ENCODE measurements at regions of chr3 and their contacts with region 1.

Region 1: DNA sequence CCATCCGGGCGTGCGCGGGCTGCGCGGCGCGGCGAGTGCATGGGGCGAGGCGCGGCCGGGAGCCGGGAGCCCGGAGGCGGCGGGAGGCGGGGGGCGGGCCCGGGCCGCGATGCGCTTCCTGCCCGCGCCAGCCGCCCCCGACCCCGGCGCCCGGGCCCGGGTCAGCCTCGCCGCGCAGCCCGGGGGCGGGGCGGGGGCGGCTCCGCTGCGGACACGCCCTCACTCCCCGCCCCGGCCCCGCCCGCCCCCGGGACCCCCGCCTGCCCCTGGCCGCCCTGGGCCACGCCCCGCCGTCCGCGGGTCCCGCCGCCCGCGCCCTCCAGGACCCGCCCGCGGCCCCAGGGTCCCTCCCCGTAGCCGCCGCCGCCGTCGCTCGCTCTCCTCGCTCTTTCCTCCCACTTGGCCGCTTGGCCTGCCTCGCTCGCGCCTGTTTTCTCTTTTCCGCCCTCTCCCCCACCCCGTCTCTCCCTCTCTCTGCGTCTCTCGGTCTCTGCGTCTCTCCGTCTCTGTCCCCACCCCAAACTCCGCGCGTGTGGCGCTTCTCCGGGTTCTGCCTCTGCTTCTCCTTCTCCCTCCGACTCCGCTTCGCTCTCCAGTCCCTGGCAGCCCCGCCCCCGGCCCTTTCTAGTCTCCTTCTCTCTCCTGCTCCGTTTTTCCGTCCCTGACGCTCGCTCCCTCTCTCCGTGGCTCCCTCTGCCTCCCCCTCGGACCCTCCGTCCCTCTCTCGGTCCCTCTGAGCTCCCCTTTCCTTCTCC is at the start of gene PLXND1:
- DNase-seq: peak; percentile 30 to 71 (median 53)
- H3K4me3 ChIP-seq: peak within 1 kb of the TSS; percentile 47
- H3K4me3 Mint-ChIP-seq: peak within 1 kb of the TSS; percentile 91 to 98 (median 94)
- H3K27ac ChIP-seq: peak within 1 kb of the TSS; percentile 24
- H3K27ac Mint-ChIP-seq: peak within 1 kb of the TSS; percentile 77 to 96 (median 92)
- H3K4me1 ChIP-seq: peaks cover 4% of the 10 kb centered on the region
- H3K4me1 Mint-ChIP-seq: peaks cover 34 to 54% (median 35%) of the 10 kb centered on the region in 3 donors
- H3K27me3 ChIP-seq: no peaks in the 10 kb centered on the region
- H3K27me3 Mint-ChIP-seq: peaks cover 3 to 4% of the 10 kb centered on the region in 2 donors
- total RNA-seq, gene PLXND1: 12.1 to 15.2 TPM

Region 2: DNA sequence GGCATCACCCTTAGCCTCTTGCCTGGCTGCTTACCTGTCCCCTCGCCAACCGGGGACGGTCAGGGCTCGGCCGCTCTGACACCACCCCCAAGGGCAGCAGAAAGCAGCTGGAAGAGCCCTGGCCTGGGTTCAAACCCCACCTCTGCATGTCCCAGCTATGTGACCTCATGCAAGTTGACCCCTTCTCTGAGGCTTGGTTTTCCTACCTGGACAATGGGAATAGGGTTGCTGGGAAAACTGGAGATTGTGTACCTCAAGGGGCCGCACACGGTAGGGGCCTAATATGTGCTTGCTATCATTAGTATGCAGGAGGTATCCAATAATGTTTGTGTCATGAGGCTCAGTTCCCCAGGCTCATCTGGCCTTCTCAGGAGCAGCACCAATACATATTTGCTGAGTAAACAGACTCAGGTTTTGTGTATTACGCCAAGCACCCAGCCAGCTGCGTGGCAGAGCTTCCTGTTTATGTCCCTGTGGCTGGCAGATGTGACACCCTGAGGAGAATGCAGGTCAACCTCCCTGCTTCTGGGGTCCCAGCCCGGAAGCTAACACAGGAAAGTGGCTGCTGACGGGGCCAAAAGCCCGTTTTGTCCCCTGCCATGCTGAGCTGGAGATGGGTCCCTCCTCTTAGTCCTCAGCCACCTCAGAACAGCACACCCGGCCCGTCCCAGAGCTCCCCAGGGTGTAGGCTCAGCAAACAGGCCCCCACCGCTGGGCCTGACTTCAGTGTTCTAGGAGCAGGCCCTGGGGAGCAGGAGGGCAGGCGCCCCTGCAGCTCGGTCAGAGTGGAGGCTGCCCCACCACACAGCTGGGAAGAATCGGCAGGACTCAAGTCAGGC is 30.1 kb before region 1 on chr3:
- CTCF ChIA-PET with region 1: interaction called, 21 read pairs
- POLR2A ChIA-PET with region 1: interaction called, 54 read pairs
- DNase-seq: peak; percentile 69 to 92 (median 83)
- H3K4me3 ChIP-seq: no peak overlapping the region
- H3K4me3 Mint-ChIP-seq: peak overlapping the region; percentile 50 to 86 (median 68)
- H3K27ac ChIP-seq: peak overlapping the region; percentile 16
- H3K27ac Mint-ChIP-seq: peak overlapping the region; percentile 87 to 100 (median 98)
- H3K4me1 ChIP-seq: peaks cover 47% of the 10 kb centered on the region
- H3K4me1 Mint-ChIP-seq: peaks cover 57 to 77% (median 61%) of the 10 kb centered on the region in 3 donors
- H3K27me3 ChIP-seq: no peaks in the 10 kb centered on the region
- H3K27me3 Mint-ChIP-seq: no peaks in the 10 kb centered on the region

Region 3: DNA sequence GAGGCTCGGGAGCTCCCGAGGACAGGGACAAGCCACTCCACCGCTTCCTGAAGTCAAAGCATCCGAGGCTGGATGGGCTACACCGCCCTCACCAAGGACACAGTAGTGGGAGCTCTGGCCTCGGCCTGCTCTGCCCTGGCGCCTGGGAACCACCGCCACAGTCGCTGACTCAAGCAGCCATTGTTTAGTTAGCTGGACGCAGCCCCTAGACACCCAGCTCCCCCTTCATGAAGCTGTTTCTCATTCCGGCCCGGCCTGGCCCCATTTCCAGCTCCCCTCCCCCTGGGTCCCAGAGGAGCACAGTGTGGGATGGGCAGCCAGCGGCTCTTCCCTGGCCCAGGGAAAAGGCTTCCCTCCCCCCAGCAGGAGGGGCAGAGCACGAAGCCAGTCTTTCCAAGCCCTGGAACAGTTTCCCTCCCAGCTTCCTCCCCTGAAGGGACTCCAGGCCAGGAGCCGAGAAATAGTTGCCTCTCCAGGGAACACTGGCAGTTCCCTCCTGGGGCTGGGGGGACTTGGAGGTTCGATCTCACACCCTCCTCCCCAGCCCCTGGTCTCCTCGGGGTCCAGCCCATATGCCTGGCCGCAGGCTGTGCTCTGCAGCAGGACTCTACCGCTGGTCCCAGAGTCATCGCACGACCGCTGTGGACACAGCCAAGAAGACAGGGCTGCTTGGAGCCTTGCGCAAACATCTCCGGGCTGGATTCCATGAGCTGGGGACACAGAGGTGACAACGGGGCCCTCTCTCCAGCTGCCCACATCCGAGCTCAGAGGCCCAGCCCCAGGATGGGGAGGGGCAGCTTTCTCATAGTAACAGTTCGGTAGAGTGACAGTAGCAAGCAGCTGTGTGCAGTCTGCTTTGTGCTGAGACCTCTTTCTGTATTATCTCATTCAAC is 10.4 kb before region 1 on chr3:
- CTCF ChIA-PET with region 1: interaction called, 19 read pairs
- POLR2A ChIA-PET with region 1: interaction called, 10 read pairs
- DNase-seq: no peak
- H3K4me3 ChIP-seq: no peak overlapping the region
- H3K4me3 Mint-ChIP-seq: peak overlapping the region in 4 of 7 donors; percentile 3 to 49 (median 46)
- H3K27ac ChIP-seq: peak overlapping the region; percentile 2
- H3K27ac Mint-ChIP-seq: peak overlapping the region in 6 of 8 donors; percentile 6 to 88 (median 62)
- H3K4me1 ChIP-seq: peaks cover 25% of the 10 kb centered on the region
- H3K4me1 Mint-ChIP-seq: peaks cover 58 to 80% (median 66%) of the 10 kb centered on the region in 3 donors
- H3K27me3 ChIP-seq: no peaks in the 10 kb centered on the region
- H3K27me3 Mint-ChIP-seq: peaks cover 0 to 9% of the 10 kb centered on the region in 2 donors

Region 4: DNA sequence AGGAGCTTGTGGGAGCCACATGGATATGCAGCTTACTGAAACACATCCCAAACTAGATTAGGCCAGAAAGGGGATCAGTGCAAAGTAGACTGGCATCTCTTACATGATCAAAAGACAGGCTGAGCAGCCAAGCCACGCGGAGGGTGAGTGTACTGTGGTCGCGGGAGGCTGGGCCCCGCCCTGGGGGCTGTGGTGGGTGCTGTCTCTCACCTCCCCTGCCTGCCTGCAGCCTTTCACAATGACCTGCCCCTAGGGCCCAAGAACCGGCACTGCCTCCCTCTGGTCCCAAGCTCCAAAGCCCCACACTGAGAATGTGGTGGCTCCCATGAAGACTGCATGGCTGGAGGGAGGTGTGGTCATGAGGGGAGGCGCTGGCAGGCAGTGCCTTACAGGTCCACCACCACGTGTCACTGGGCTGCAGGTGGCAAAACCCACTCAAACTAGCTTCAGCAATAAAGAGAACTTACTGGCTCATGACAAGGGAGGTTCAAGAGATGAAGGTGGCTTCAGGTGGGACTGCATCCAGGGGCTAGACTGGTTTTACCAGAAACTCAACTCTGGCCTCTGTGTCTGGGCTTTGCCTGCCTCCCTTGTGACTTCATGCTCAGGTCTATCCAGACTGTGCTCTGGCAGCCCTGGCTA is 27.1 kb after region 1 on chr3:
- CTCF ChIA-PET with region 1: no interaction called
- POLR2A ChIA-PET with region 1: no interaction called
- DNase-seq: no peak
- H3K4me3 ChIP-seq: no peak overlapping the region
- H3K4me3 Mint-ChIP-seq: no peak overlapping the region
- H3K27ac ChIP-seq: no peak overlapping the region
- H3K27ac Mint-ChIP-seq: peak overlapping the region in 2 of 8 donors; percentile 52 to 84
- H3K4me1 ChIP-seq: no peaks in the 10 kb centered on the region
- H3K4me1 Mint-ChIP-seq: peaks cover 3 to 5% (median 4%) of the 10 kb centered on the region in 3 donors
- H3K27me3 ChIP-seq: no peaks in the 10 kb centered on the region
- H3K27me3 Mint-ChIP-seq: peaks cover 5 to 6% of the 10 kb centered on the region in 2 donors